ENCODE measurements at regions of chr14 and their contacts with region 1.

Region 1: DNA sequence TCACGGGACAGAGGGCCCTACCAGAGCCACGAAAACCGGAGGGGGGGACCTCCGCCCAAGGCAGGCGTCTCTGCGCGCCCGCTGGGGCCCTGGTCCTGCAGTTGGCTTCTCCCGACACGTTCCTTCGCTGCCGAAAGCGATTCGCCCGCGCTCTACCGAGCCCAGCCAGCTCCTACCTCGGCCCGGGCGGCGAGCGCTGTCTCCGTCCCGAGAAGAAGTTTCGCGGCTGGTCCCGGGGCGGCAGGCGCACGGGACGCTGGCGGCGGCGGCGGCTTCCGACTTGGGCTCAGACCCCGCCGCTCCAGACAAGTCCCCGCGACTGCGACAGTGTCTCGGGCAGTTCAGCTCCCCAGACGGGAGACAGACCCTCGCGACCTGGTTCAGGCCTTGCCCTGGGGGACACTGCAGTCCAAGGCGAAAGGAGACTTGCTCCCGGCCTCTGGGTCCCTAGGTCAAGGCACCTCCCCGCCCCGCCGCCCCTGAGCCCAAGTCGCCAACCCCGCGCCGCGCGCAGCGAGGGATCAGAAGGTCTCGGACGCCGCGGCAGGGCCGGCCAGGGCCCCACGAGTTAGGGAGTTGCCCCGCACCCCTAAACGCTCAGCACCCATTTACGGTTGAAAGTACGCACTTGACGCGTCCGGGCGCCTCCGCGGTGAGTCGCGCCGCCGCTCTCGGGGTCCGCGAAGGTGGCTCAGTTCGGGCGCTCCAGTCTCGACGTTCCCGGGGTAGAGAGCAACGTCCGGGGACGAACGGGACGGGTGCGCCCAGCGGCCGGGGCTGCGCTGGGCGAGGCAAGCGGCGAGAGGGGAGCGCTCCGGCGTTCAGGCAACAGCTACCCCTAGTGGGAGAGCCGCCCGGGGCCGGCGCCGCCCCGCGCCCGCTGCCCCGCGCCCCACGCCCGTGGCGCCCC is 1.4 kb upstream of the DIO3 start:
- DNase-seq: peak; percentile 81
- H3K4me3 ChIP-seq: peak overlapping the region; percentile 57 to 64 (median 61)
- H3K27ac ChIP-seq: peak overlapping the region; percentile 38 to 75 (median 66)
- H3K4me1 ChIP-seq: peaks cover 0 to 22% (median 11%) of the 10 kb centered on the region in 4 donors
- H3K27me3 ChIP-seq: peaks cover 36 to 77% (median 39%) of the 10 kb centered on the region in 3 donors
- CTCF ChIP-seq: peak in 1 of 4 experiments; percentile 24
- EP300 ChIP-seq: no peak
- POLR2A ChIP-seq: no peak

Region 2: GRCh38 chr14:100662879-100663760 is 896.8 kb before region 1 on chr14:
- intact Hi-C with region 1: loop called (anchors 10 kb)
- DNase-seq: peak; percentile 77
- H3K4me3 ChIP-seq: no peak overlapping the region
- H3K27ac ChIP-seq: no peak overlapping the region
- H3K4me1 ChIP-seq: peaks cover 0 to 21% (median 17%) of the 10 kb centered on the region in 4 donors
- H3K27me3 ChIP-seq: peaks cover 0 to 32% (median 13%) of the 10 kb centered on the region in 3 donors
- CTCF ChIP-seq: peak; percentile 62 to 90 (median 80)
- EP300 ChIP-seq: no peak
- POLR2A ChIP-seq: no peak

Region 3: DNA sequence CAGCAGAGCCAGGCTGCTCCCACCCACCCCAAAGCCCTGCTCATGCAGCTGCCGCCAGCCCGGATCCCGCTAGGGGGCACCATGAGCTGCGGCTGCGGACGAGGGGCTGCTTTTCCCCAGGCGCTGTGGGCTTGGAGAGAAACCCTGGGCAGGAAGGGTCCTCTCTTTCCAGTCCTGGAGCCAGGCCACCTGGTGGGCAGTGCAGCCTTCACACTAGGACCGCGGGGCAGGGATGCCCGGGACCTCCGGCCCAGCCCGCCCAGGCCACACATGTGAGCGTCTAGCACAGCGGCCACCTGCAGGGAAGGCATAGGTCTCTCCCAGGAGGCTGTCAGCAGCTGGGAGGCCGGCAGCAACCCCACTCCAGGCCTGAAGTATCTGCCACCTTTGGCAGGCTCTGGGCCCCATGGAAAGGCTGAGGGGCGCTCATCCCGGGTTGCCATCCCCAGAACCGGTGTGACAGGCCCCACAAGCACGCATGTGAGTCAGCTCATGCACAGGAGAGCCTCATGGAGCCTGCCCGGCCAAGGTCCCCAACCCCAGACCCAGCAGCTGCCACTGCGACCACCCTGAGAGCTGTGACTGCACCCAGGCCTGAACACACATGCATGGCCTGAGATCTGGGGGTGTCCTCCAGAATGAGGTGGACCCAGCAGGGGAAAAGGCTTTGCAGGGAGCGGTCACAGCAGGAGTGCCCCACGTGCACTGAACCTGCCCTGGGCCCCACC is 376.3 kb before region 1 on chr14:
- intact Hi-C with region 1: loop called (anchors 1 kb)
- DNase-seq: no peak
- H3K4me3 ChIP-seq: no peak overlapping the region
- H3K27ac ChIP-seq: no peak overlapping the region
- H3K4me1 ChIP-seq: no peaks in the 10 kb centered on the region
- H3K27me3 ChIP-seq: peaks cover 0 to 3% (median 0%) of the 10 kb centered on the region in 3 donors
- CTCF ChIP-seq: peak; percentile 44 to 52 (median 48)
- EP300 ChIP-seq: no peak
- POLR2A ChIP-seq: no peak

Region 4: DNA sequence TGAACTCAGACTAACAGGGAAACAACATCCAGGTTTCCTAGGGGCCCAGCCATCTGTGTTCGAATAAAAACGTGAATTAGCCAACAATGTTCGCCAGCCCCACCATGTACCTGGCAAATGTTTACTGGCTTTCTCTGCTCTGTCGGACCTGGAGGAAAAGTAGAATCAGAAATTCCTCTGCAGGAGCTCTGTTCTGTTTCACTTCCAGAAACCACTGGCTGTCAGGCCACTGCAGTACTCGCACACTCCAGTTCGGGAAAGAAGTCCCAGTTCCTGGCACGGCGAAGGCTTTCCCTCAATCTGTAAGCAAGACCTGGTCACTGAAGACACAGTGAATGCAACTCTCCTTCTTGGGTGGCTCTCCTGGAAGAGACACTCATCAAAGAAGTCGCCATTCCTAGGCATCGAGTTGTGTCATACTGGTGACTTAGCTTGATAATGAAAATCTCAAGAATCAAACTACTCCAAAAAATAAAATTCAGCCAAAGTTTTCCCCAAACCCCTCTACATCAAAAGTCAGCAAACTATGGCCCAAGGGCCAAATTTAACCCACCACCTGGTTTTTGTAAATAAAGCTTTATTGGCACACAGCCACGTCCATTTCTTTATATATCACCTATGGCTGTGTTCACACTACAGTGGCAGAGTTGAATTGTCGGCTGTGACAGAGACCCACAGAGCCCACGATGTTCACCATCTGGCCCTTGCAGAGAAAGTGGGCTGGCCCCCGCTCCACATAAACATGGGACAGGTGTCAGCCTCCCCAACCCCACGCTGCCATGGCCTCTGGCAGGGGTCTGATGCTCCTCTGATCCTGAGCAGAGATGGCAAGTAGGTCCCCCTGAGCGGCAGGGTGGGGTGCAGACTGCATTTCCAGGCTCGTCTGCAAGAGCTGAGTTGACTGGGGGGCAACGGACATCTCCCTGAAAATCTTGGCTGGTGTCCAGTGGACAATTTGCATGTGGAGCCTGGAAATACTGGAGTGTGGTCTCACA is 187.8 kb before region 1 on chr14:
- intact Hi-C with region 1: loop called (anchors 5 kb)
- DNase-seq: peak; percentile 84
- H3K4me3 ChIP-seq: no peak overlapping the region
- H3K27ac ChIP-seq: peak overlapping the region in 3 of 4 donors; percentile 70 to 79 (median 77)
- H3K4me1 ChIP-seq: peaks cover 0 to 51% (median 44%) of the 10 kb centered on the region in 4 donors
- H3K27me3 ChIP-seq: no peaks in the 10 kb centered on the region
- CTCF ChIP-seq: no peak
- EP300 ChIP-seq: peak in 2 of 4 donors; percentile 13 to 76
- POLR2A ChIP-seq: no peak

Region 5: DNA sequence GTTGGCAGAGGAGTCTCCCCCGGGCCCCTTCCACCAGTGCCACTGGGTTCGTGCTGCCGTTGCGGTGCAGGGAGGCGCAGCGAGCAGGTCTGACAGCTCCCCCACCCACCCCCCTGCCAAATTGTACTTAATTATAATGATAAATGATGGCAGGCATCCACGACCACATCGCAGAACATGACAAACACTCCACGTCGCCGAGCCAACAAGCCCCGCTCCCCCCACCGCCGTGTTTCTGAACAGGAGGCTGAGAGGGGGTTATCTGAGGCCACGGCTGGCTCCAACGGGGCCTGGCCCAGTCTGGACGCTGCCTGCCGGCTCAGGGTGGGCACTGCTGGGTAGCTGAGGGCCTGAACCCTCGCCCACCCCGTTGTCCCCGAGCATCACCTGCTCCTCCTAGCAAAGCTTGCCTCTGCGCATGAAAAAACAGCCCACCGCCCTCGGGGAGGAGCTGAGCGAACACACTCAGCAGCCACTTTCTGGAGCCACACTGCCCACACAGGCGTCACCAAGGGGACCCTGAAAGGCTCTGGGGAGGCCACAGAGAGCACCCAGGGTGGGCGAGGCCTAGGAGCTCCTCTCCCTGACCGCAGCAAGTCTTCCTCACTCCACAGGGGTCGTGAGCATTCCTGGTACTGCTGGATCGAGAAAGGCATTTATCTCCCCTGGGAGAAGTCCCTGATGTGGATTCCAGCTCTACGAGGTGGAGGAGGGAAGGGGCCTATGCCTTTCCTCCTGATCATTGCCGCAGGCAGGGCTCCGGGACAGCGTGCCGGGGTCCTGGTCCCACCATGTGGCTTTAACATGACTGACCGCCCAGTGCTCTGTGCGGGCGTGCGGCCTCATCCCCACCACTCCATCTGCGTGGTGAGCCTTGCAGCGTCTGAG is 34.0 kb before region 1 on chr14:
- intact Hi-C with region 1: no loop called
- DNase-seq: no peak
- H3K4me3 ChIP-seq: no peak overlapping the region
- H3K27ac ChIP-seq: no peak overlapping the region
- H3K4me1 ChIP-seq: no peaks in the 10 kb centered on the region
- H3K27me3 ChIP-seq: no peaks in the 10 kb centered on the region
- CTCF ChIP-seq: no peak
- EP300 ChIP-seq: no peak
- POLR2A ChIP-seq: no peak

Region 6: GRCh38 chr14:101620031-101620788 is 60.3 kb after region 1 on chr14:
- intact Hi-C with region 1: no loop called
- DNase-seq: no peak
- H3K4me3 ChIP-seq: no peak overlapping the region
- H3K27ac ChIP-seq: no peak overlapping the region
- H3K4me1 ChIP-seq: no peaks in the 10 kb centered on the region
- H3K27me3 ChIP-seq: no peaks in the 10 kb centered on the region
- CTCF ChIP-seq: no peak
- EP300 ChIP-seq: no peak
- POLR2A ChIP-seq: no peak